ENCODE measurements at regions of chr20 and their contacts with region 1.

Region 1: GRCh38 chr20:50085452-50086365 is 27.2 kb downstream of the UBE2V1 start:
- DNase-seq: peak; percentile 86
- H3K27ac ChIP-seq: peak overlapping the region; percentile 70
- CTCF ChIP-seq: peak; percentile 98

Region 2: GRCh38 chr20:50101281-50101680 is 15.6 kb after region 1 on chr20:
- CTCF ChIA-PET with region 1: interaction called, 11 read pairs
- POLR2A ChIA-PET with region 1: no interaction called
- DNase-seq: no peak
- H3K27ac ChIP-seq: no peak overlapping the region
- CTCF ChIP-seq: no peak

Region 3: DNA sequence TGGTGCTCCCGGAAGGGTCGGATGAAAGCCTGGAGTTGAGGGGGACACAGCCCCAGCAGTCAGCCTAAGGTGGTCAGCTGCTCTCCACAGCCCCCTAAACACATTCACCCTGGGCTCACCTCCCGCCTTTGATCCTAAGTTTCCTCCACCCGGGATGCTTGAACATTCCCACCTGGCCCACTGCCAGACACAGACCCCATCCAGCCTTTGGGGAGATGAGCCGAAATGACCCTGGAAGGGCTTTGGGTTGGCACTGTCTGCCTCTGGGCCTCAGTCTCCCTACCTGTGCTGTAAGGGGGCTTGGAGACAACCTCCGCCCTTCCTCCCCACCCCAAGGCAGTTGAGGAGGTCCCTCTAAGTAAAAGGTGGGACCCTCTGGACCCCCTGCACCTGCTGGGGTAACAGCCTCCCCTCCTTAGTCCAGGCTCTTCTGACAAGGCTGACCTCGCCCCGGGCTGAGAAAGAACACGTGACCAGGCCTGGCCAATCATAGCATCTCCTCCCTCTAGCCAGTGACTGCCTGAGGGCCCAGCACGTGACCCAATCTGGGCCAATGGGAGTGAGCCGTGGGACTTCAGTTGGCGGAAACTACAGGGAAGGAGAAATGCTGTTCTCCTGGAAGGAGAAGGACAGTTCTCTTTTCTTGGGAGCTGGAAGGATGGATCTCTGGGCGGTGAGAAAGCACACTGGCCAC is 44.1 kb after region 1 on chr20:
- CTCF ChIA-PET with region 1: no interaction called
- POLR2A ChIA-PET with region 1: no interaction called
- DNase-seq: peak; percentile 68
- H3K27ac ChIP-seq: peak overlapping the region; percentile 62
- CTCF ChIP-seq: no peak

Measured in RWPE1 (cell line).